HepG2 (cell line): ENCODE measurements at regions of chr10 and their contacts with region 1.

Region 1: DNA sequence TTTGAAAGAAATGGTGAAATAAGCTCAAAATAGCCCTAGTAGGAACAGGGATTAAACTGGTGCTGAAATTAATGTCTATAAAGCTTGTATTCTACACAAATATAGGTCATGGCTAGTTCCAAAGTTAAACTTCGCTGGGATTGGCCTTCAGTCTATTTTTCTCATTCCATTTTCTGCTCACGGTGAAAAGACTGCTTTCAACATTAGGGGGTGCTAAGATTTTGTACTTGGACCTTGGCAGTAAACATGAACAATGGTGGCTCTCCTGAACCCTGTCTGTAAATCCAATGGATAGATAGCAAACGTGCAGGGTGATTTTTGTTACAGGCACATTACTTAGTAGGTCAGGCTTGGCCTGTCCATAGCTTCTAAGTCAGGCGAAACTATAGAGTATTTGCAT is 36.0 kb upstream of the RSU1 start:
- DNase-seq: peak; percentile 10
- ATAC-seq: peak; percentile 48; the same call in 2 of the 3 replicates
- H3K4me3 ChIP-seq: no peak overlapping the region
- H3K27ac ChIP-seq: no peak overlapping the region
- H3K4me1 ChIP-seq: no peaks in the 10 kb centered on the region
- H3K27me3 ChIP-seq: no peaks in the 10 kb centered on the region
- CTCF ChIP-seq: peak; percentile 56
- EP300 ChIP-seq: no peak
- POLR2A ChIP-seq: no peak
- RAD21 ChIP-seq: no peak

Region 2: GRCh38 chr10:17169803-17170202 is 316.6 kb after region 1 on chr10:
- CTCF ChIA-PET with region 1: no interaction called
- POLR2A ChIA-PET with region 1: no interaction called
- in situ Hi-C with region 1: no loop called
- intact Hi-C with region 1: loop called (anchors 5 kb)
- DNase-seq: no peak
- ATAC-seq: no peak
- H3K4me3 ChIP-seq: no peak overlapping the region
- H3K27ac ChIP-seq: no peak overlapping the region
- H3K4me1 ChIP-seq: no peaks in the 10 kb centered on the region
- H3K27me3 ChIP-seq: no peaks in the 10 kb centered on the region
- CTCF ChIP-seq: no peak
- EP300 ChIP-seq: no peak
- POLR2A ChIP-seq: no peak
- RAD21 ChIP-seq: no peak